ENCODE measurements at regions of chr15 and their contacts with region 1.

Region 1: DNA sequence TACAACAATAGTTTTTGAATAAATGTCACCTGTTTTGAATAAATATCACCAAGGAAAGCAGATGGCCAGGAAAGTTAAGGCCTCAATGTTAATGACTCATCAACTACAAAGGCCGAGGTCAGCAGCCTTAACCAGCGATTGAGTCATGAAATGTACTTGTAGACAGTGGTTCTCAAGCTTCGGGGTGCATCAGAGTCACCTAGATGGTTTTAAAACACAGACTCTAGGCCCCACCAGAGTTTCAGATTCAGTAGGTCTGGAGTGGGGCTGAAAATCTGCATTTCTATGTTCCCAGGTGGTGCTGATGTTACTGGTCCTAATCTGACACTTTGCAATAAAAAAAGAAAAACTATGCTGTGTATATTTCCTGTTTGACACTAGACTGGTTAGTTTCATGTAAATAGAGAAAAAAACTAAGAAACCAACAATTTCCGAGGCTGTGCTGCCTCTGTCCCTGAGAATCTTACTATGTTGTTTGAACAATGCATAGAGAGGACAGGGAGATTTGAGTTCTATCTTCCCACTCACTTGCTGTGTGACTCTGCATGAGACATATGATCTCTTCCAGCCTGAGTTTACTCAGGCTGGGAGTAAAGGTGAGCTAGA is 9.8 kb downstream of the RAB27A start:
- DNase-seq: peak; percentile 68
- H3K4me3 Mint-ChIP-seq: peak overlapping the region; percentile 63
- H3K27ac Mint-ChIP-seq: peak overlapping the region; percentile 91
- H3K4me1 Mint-ChIP-seq: peaks cover 97% of the 10 kb centered on the region
- H3K27me3 Mint-ChIP-seq: no peaks in the 10 kb centered on the region

Region 2: DNA sequence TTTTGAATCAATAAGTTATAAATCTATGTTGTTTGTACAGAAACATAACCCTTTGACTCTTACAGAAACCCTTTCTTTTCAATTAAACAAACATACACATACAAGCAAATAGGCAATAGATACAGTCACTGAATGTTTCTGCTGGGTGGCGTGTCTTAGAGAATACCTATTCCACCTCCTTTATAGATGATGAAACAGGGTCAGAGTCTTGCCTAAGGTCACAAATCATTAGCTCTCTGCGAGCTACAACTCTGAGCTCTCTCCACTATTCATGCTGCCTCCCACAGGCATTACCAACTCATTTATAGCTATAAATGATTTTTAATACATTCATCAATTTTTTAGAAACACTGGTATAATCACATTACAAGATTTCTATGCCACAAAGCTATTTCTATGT is 235.7 kb before region 1 on chr15:
- CTCF ChIA-PET with region 1: no interaction called
- POLR2A ChIA-PET with region 1: no interaction called
- DNase-seq: no peak
- H3K4me3 Mint-ChIP-seq: no peak overlapping the region
- H3K27ac Mint-ChIP-seq: no peak overlapping the region
- H3K4me1 Mint-ChIP-seq: no peaks in the 10 kb centered on the region
- H3K27me3 Mint-ChIP-seq: no peaks in the 10 kb centered on the region

Region 3: DNA sequence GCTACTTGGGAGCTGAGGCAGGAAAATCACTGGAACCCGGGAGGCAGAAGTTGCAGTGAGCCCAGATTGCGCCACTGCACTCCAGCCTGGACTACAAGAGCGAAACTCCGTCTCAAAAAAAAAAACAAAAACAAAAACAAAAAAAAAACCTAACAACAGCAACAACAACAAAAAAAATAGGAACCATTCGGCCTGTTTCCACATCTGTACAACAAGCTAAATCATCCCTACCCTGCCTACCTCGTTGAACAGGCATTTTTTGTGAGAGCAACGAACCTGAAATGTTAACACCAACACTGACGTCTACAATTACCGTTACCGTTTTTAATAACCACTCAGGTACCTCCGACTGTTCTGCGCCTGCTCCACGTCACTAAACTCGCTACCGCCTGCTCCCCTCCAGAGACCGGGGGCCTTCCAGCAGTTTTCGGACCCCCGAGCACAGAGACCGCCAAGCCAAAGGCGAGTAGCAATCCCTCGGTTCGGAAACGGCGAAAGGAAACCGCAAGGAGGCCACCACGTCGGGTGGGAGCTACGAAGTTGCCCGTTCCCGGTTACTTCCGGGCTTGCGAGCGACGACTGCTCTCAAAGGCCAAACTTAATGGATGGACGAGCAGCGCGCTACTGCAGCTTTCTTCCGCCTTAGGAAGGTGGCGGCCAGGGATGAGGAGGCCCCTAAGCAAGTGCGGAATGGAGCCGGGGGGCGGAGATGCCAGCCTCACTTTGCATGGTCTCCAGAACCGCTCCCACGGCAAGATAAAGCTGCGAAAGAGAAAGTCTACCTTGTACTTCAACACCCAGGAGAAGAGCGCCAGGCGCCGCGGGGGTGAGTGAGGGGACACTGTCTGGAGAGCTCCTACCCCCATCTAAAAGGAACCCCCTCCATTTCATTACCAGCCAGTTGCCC is 39.0 kb after region 1 on chr15 and contains the starts of genes PIGB and PIGBOS1:
- CTCF ChIA-PET with region 1: interaction called, 4 read pairs
- POLR2A ChIA-PET with region 1: interaction called, 11 read pairs
- DNase-seq: peak; percentile 85
- H3K4me3 Mint-ChIP-seq: peak within 1 kb of the TSS; percentile 98
- H3K27ac Mint-ChIP-seq: peak within 1 kb of the TSS; percentile 95
- H3K4me1 Mint-ChIP-seq: peaks cover 56% of the 10 kb centered on the region
- H3K27me3 Mint-ChIP-seq: no peaks in the 10 kb centered on the region
- total RNA-seq, gene PIGB: 28.9 to 29.3 TPM
- total RNA-seq, gene PIGBOS1: 14.7 to 14.9 TPM

Region 4: GRCh38 chr15:55334997-55335396 is 55.1 kb after region 1 on chr15:
- CTCF ChIA-PET with region 1: no interaction called
- POLR2A ChIA-PET with region 1: no interaction called
- DNase-seq: no peak
- H3K4me3 Mint-ChIP-seq: no peak overlapping the region
- H3K27ac Mint-ChIP-seq: no peak overlapping the region
- H3K4me1 Mint-ChIP-seq: no peaks in the 10 kb centered on the region
- H3K27me3 Mint-ChIP-seq: no peaks in the 10 kb centered on the region